ENCODE measurements at regions of chr15 and their contacts with region 1.

Region 1: GRCh38 chr15:40274350-40275274 is 8.3 kb downstream of the ANKRD63 start:
- DNase-seq: peak; percentile 56 to 95 (median 84)
- ATAC-seq: peak; percentile 84
- H3K4me3 ChIP-seq: no peak overlapping the region
- H3K27ac ChIP-seq: no peak overlapping the region
- H3K4me1 ChIP-seq: peaks cover 3 to 31% of the 10 kb centered on the region in 2 donors
- H3K27me3 ChIP-seq: peaks cover 6 to 24% of the 10 kb centered on the region in 2 donors
- CTCF ChIP-seq: peak; percentile 99 to 100

Region 2: GRCh38 chr15:40044717-40045571 is 229.7 kb before region 1 on chr15:
- intact Hi-C with region 1: loop called in 1 of 2 experiments (anchors 5 kb)
- DNase-seq: peak; percentile 67 to 97 (median 90)
- ATAC-seq: peak; percentile 93
- H3K4me3 ChIP-seq: no peak overlapping the region
- H3K27ac ChIP-seq: peak overlapping the region; percentile 58 to 62
- H3K4me1 ChIP-seq: peaks cover 25 to 65% of the 10 kb centered on the region in 2 donors
- H3K27me3 ChIP-seq: no peaks in the 10 kb centered on the region
- CTCF ChIP-seq: peak; percentile 80 to 85

Region 3: GRCh38 chr15:40219801-40220200 is 54.8 kb before region 1 on chr15:
- intact Hi-C with region 1: loop called in 1 of 2 experiments (anchors 2 kb)
- DNase-seq: no peak
- ATAC-seq: no peak
- H3K4me3 ChIP-seq: no peak overlapping the region
- H3K27ac ChIP-seq: no peak overlapping the region
- H3K4me1 ChIP-seq: no peaks in the 10 kb centered on the region
- H3K27me3 ChIP-seq: no peaks in the 10 kb centered on the region
- CTCF ChIP-seq: no peak

Region 4: GRCh38 chr15:40357723-40358470 is 83.3 kb after region 1 on chr15 and contains the start of gene DISP2:
- intact Hi-C with region 1: no loop called
- DNase-seq: peak; percentile 84 to 97 (median 86)
- ATAC-seq: peak; percentile 93
- H3K4me3 ChIP-seq: peak within 1 kb of the TSS; percentile 48 to 58
- H3K27ac ChIP-seq: no peak within 1 kb of the TSS
- H3K4me1 ChIP-seq: peaks cover 0 to 19% of the 10 kb centered on the region in 2 donors
- H3K27me3 ChIP-seq: peaks cover 0 to 6% of the 10 kb centered on the region in 2 donors
- CTCF ChIP-seq: no peak
- polyA plus RNA-seq, gene DISP2: 0.61 to 3.1 (median 1.6) TPM

Region 5: GRCh38 chr15:41048397-41048796 is 773.8 kb after region 1 on chr15:
- intact Hi-C with region 1: no loop called
- DNase-seq: no peak
- ATAC-seq: peak; percentile 33
- H3K4me3 ChIP-seq: no peak overlapping the region
- H3K27ac ChIP-seq: no peak overlapping the region
- H3K4me1 ChIP-seq: no peaks in the 10 kb centered on the region
- H3K27me3 ChIP-seq: no peaks in the 10 kb centered on the region
- CTCF ChIP-seq: no peak

Measured in left lung (tissue), 14 donors.